ENCODE measurements at regions of chr12 and their contacts with region 1.

Region 1: DNA sequence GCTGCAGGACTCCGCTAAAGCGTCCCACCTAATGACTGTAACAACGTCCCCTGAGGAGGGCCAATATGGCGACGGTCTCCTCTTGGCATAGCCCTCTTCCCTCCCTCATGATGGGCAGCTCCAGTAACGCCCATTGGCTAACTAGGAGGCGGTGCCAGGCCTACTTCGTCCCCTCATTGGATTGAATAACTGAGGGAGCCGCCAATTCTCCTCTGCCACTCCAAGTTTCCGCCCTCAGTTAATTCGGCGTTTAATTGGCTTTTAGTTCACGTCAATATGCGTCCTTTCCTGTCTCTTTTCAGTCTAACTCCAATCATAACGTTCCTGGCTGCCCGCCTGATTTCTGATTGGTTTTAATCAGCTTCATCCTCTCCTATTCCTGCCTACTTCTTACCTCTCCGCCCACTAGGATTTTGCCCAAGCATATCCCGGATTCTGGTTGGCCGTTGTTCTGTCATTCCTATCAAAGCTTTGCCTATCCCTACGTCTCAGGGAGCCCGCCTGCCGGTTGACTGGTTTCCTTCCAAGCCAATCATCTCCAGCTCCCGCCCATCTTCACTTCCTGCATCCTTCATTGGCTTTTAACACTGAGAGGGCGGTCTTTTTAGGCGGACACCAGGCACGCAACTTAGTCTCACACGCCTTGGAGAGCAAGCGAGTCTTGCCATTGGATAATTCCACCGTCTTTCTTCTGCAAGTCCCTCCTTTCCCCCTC is 430 bp upstream of the SP1 start:
- DNase-seq: peak; percentile 100
- ATAC-seq: peak; percentile 88
- H3K4me3 ChIP-seq: peak overlapping the region; percentile 49 to 54
- H3K27ac ChIP-seq: peak overlapping the region; percentile 99
- H3K4me1 ChIP-seq: peaks cover 25% of the 10 kb centered on the region
- H3K27me3 ChIP-seq: no peaks in the 10 kb centered on the region
- CTCF ChIP-seq: no peak

Region 2: GRCh38 chr12:52720437-52720836 is 659.1 kb before region 1 on chr12:
- CTCF ChIA-PET with region 1: no interaction called
- POLR2A ChIA-PET with region 1: no interaction called
- in situ Hi-C with region 1: no loop called
- intact Hi-C with region 1: no loop called
- DNase-seq: no peak
- ATAC-seq: no peak
- H3K4me3 ChIP-seq: no peak overlapping the region
- H3K27ac ChIP-seq: no peak overlapping the region
- H3K4me1 ChIP-seq: no peaks in the 10 kb centered on the region
- H3K27me3 ChIP-seq: no peaks in the 10 kb centered on the region
- CTCF ChIP-seq: no peak

Region 3: GRCh38 chr12:53251477-53252348 is 127.8 kb before region 1 on chr12:
- CTCF ChIA-PET with region 1: no interaction called
- POLR2A ChIA-PET with region 1: no interaction called
- in situ Hi-C with region 1: no loop called
- intact Hi-C with region 1: no loop called
- DNase-seq: peak; percentile 63
- ATAC-seq: peak; percentile 92
- H3K4me3 ChIP-seq: peak overlapping the region; percentile 74 to 86
- H3K27ac ChIP-seq: peak overlapping the region; percentile 90
- H3K4me1 ChIP-seq: peaks cover 11% of the 10 kb centered on the region
- H3K27me3 ChIP-seq: no peaks in the 10 kb centered on the region
- CTCF ChIP-seq: peak; percentile 75; the same call in 1 of the 2 replicates

Region 4: GRCh38 chr12:53313996-53314395 is 65.5 kb before region 1 on chr12:
- CTCF ChIA-PET with region 1: no interaction called
- POLR2A ChIA-PET with region 1: no interaction called
- in situ Hi-C with region 1: no loop called
- intact Hi-C with region 1: no loop called
- DNase-seq: no peak
- ATAC-seq: no peak
- H3K4me3 ChIP-seq: no peak overlapping the region
- H3K27ac ChIP-seq: no peak overlapping the region
- H3K4me1 ChIP-seq: no peaks in the 10 kb centered on the region
- H3K27me3 ChIP-seq: no peaks in the 10 kb centered on the region
- CTCF ChIP-seq: no peak

Region 5: GRCh38 chr12:53352331-53353256 is 27.0 kb before region 1 on chr12:
- CTCF ChIA-PET with region 1: interaction called, 13 read pairs
- POLR2A ChIA-PET with region 1: interaction called, 4 read pairs
- in situ Hi-C with region 1: no loop called
- intact Hi-C with region 1: no loop called
- DNase-seq: peak; percentile 84
- ATAC-seq: peak; percentile 99
- H3K4me3 ChIP-seq: no peak overlapping the region
- H3K27ac ChIP-seq: peak overlapping the region; percentile 75
- H3K4me1 ChIP-seq: peaks cover 7% of the 10 kb centered on the region
- H3K27me3 ChIP-seq: no peaks in the 10 kb centered on the region
- CTCF ChIP-seq: peak; percentile 89

Region 6: DNA sequence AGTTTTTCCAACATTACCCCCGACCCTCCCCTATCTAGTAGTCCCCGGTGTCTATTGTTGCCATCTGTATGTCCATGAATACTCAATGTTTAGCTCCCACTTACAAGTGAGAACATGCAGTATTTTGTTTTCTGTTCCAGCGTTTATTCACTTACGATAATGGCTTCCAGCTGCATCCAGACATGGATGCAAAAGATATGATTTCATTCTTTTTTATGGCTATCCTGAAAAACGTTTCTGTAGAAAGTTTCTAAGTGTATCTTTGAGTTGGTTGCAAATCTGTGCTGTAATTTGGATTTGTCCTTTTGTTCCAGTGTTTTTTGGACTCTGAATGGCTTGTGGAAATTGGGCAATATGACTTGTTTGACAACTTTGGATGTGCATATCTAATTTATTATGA is 12.2 kb after region 1 on chr12:
- CTCF ChIA-PET with region 1: no interaction called
- POLR2A ChIA-PET with region 1: interaction called, 12 read pairs
- in situ Hi-C with region 1: no loop called
- intact Hi-C with region 1: no loop called
- DNase-seq: no peak
- ATAC-seq: no peak
- H3K4me3 ChIP-seq: no peak overlapping the region
- H3K27ac ChIP-seq: no peak overlapping the region
- H3K4me1 ChIP-seq: peaks cover 16% of the 10 kb centered on the region
- H3K27me3 ChIP-seq: no peaks in the 10 kb centered on the region
- CTCF ChIP-seq: no peak

Region 7: DNA sequence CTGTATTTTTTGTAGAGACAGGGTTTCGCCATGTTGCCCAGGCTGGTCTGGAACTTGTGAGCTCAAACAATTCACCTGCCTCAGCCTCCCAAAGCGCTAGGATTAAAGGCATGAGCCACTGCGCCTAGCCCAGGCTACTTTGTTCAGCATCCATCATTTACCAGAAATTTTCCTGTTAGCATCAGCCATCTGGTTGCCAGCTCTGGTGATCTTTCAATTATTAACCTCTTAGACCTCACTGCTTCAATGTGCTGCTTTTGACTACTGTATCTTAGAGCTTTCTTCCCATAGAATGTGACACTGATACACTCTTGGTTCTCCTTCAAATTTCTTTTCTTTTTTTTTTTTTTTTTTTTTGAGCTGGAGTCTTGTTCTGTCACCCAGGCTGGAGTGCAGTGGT is 38.7 kb after region 1 on chr12:
- CTCF ChIA-PET with region 1: interaction called, 5 read pairs
- POLR2A ChIA-PET with region 1: interaction called, 16 read pairs
- in situ Hi-C with region 1: no loop called
- intact Hi-C with region 1: no loop called
- DNase-seq: no peak
- ATAC-seq: no peak
- H3K4me3 ChIP-seq: no peak overlapping the region
- H3K27ac ChIP-seq: no peak overlapping the region
- H3K4me1 ChIP-seq: peaks cover 16% of the 10 kb centered on the region
- H3K27me3 ChIP-seq: no peaks in the 10 kb centered on the region
- CTCF ChIP-seq: no peak

Region 8: DNA sequence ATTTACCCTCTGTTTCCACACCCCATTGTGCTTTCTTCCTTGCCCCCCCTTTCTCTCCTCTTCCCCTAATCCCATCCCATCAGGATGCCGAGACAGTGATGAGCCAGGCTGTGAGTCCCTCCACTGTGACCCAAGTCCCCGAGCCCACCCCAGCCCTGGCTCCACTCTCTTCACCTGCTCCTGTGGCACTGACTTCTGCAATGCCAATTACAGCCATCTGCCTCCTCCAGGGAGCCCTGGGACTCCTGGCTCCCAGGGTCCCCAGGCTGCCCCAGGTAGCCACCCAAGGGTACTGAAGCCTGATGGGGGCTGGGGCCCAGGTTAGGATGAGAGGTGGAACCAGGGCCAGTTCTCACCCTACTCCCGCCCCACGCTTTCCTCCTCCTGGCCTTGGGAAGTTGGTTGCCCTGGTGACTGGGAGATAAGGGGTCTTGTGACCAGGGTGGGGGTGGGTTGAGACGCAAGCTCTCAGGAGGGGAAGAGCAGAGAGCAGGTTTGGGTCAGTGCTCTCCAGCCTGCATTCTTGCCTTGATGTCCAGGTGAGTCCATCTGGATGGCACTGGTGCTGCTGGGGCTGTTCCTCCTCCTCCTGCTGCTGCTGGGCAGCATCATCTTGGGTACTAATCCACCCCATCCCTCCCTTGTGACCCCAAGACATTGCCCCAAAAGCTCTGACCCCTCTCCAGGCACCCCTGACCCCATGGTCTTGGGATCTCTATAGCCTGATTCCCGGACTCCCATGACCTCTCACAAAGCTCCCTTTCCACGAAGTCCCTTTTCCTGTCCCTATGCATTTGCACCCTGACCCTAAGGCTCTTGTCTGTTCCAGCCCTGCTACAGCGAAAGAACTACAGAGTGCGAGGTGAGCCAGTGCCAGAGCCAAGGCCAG is 45.3 kb after region 1 on chr12:
- CTCF ChIA-PET with region 1: interaction called, 5 read pairs
- POLR2A ChIA-PET with region 1: interaction called, 11 read pairs
- in situ Hi-C with region 1: no loop called
- intact Hi-C with region 1: no loop called
- DNase-seq: no peak
- ATAC-seq: no peak
- H3K4me3 ChIP-seq: no peak overlapping the region
- H3K27ac ChIP-seq: no peak overlapping the region
- H3K4me1 ChIP-seq: peaks cover 14% of the 10 kb centered on the region
- H3K27me3 ChIP-seq: no peaks in the 10 kb centered on the region
- CTCF ChIP-seq: no peak

Measured in Panc1 (cell line).